Mammary epithelial cell (primary cell): ENCODE measurements at regions of chr3 and their contacts with region 1.

Region 1: DNA sequence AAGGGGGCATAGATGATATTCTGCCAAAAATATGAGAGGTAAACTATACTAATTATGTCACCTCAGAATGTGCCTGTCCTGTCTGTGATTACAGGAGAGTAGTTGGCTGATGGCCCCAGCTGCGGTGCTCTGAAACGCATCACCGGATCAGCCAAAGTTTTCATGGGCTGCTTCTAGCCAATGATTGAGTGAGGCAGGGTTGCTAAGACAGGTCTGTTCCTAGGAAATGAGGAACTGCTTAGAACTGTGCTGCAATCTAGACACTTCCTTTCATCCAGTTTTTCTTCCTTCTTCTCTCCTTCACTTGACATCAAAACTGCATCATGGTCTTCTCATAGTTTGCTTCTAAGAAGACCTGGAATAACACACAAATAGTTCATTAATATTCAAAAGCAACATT is 124.0 kb downstream of the KCNH8 start:
- DNase-seq: no peak
- H3K4me3 ChIP-seq: no peak overlapping the region
- H3K27ac ChIP-seq: no peak overlapping the region
- H3K4me1 ChIP-seq: no peaks in the 10 kb centered on the region
- H3K27me3 ChIP-seq: no peaks in the 10 kb centered on the region
- CTCF ChIP-seq: no peak

Region 2: GRCh38 chr3:19248143-19248542 is 24.2 kb before region 1 on chr3:
- CTCF ChIA-PET with region 1: no interaction called
- dilution Hi-C with region 1: loop called (anchors 5 kb)
- in situ Hi-C with region 1: no loop called
- intact Hi-C with region 1: no loop called
- DNase-seq: no peak
- H3K4me3 ChIP-seq: no peak overlapping the region
- H3K27ac ChIP-seq: no peak overlapping the region
- H3K4me1 ChIP-seq: no peaks in the 10 kb centered on the region
- H3K27me3 ChIP-seq: no peaks in the 10 kb centered on the region
- CTCF ChIP-seq: no peak

Region 3: DNA sequence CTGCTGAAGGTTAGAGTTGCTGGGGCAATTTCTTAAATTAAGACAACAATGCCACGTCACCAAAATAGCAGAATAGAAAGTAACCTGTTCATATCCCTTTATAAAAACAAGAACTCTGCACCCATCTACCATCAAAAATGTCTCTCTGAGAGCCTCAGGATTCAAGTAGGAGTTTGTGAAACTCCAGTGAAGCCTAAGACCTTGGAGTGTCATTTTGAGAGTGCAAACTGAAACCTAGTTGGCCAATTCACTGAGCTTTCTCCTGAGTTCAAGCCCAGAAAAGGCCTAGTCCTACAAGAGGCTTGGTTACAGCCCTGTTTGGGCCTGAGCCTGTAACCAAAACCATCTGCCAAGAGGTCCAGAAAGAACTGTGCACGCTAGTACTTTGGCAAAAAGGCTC is 326.6 kb after region 1 on chr3:
- CTCF ChIA-PET with region 1: no interaction called
- dilution Hi-C with region 1: no loop called
- in situ Hi-C with region 1: no loop called
- intact Hi-C with region 1: no loop called
- DNase-seq: no peak
- H3K4me3 ChIP-seq: no peak overlapping the region
- H3K27ac ChIP-seq: no peak overlapping the region
- H3K4me1 ChIP-seq: no peaks in the 10 kb centered on the region
- H3K27me3 ChIP-seq: no peaks in the 10 kb centered on the region
- CTCF ChIP-seq: no peak